ENCODE measurements at regions of chr19 and their contacts with region 1.

Region 1: DNA sequence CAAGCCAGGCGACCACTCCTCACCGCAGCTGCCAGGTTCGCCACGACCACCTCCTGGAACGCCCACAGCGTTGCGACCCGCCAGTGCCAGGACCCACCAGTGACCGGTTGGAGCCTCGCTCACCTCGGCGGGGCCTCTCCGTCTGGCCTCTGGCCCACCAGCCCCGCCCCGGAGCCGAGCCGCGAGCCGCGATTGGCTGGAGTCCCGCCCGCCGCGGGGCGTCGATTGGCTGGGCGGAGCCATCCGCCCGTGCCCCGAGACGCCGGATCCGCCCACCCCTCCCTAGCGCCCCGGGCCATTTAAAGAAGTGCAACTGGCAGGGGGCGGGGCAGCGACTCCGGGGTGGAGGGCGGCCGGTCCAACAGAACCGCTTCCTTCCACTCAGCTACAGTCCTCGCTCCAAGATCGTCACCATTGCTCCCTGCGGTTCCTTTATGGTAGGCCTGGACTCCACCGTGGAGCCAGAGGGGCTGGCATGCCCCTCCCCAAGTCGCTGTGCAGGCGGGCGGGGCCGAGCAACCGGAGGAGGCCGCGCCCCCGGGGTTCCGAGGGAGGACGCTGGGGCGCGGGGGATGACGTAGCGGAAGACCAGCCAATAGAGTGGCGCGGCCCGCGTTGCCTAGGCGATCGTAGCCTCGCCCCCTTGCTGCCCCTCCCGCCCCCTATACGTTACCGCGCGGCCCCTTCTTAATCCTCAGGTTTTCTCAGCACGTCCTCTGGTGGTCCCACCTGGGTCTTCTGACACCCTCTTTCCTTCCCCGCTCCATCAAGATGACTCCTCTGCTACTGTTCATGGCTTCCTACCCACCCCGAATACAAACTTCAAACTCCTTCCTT is at the start of gene SERTAD3:
- DNase-seq: peak; percentile 99
- ATAC-seq: peak; percentile 64
- H3K4me3 Mint-ChIP-seq: peak within 1 kb of the TSS; percentile 96
- H3K27ac Mint-ChIP-seq: peak within 1 kb of the TSS; percentile 96
- H3K4me1 Mint-ChIP-seq: peaks cover 14% of the 10 kb centered on the region
- H3K27me3 Mint-ChIP-seq: no peaks in the 10 kb centered on the region
- total RNA-seq, gene SERTAD3: 12.9 to 13.5 TPM

Region 2: DNA sequence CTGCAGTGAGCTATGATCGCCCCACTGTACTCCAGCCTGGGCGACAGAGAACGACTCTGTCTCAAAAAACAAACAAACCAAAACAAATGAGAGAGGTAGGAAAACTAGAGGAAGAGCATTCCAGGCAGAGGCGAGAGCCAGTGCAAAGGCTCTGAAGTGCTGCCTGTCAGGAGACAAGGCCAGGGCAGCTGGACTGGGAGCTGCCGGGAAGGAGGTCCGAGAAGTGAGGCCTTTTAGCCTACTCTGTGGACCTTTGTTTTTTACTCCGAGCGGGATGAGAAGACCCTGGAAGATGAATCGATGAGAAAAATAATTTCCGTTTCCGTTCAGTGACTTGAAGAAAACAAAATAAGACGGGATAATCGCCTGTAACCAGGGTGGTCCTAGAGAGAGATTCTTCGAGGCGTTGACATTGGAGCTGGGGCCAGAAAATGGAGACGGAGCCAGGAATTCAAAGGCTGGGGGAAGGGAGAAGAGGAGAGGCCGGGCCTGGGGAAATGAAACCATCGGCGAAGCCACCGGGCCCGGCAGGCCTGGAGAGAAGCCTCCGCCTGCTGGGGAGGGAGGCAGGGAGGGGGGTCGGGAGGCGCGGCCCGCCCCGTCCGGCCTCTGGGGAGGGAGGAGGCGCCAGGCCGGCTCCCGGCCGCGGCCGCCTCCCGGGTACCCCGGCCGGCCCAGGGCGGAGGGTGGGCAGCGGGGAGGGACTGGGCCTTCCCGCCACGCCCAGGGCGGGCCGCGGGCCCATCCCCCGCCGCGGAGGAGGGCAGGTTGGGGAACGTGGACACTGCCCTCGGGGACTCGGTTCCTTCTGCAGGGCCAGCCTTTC is 10.8 kb before region 1 on chr19:
- POLR2A ChIA-PET with region 1: interaction called, 19 read pairs
- DNase-seq: peak; percentile 73
- ATAC-seq: peak; percentile 93
- H3K4me3 Mint-ChIP-seq: peak overlapping the region; percentile 98
- H3K27ac Mint-ChIP-seq: peak overlapping the region; percentile 98
- H3K4me1 Mint-ChIP-seq: peaks cover 10% of the 10 kb centered on the region
- H3K27me3 Mint-ChIP-seq: no peaks in the 10 kb centered on the region

Region 3: DNA sequence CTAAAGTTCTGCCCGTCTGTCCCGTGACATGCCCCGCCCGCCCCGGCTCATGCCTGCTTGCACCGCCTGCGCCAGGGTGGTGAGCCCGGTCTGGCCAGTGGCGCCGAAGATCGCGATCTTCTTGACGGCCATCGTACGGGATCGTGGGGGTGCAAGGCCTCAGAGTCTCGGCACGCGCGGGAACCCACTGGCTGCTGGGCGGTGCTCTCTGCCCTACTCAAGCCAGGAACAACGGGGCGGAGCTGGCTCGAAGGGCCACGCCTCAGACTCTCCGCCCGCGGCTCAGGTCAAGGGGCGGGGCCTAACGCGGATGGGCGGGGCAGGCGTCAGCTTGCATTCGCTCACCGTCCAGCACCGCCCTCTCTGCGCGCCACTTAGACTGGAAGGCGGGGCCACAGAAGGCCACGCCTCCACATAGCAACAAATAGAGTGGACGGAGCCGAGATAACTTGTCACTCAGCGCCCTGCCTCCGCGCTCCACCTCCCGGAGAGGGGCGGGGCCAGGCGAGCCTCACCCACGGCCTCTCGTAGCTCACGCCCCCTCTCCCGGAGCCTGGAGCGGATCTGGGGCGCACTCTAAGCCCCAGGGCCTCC is 21.2 kb after region 1 on chr19 and contains the start of gene BLVRB:
- POLR2A ChIA-PET with region 1: interaction called, 10 read pairs
- DNase-seq: peak; percentile 100
- ATAC-seq: peak; percentile 85
- H3K4me3 Mint-ChIP-seq: peak within 1 kb of the TSS; percentile 73
- H3K27ac Mint-ChIP-seq: peak within 1 kb of the TSS; percentile 79
- H3K4me1 Mint-ChIP-seq: peaks cover 24% of the 10 kb centered on the region
- H3K27me3 Mint-ChIP-seq: peaks cover 21% of the 10 kb centered on the region
- total RNA-seq, gene BLVRB: 20.4 to 21.5 TPM